ENCODE measurements at regions of chr12 and their contacts with region 1.

Region 1: GRCh38 chr12:98572010-98572409 is 21.5 kb upstream of the SLC25A3 start:
- DNase-seq: no peak
- H3K27ac ChIP-seq: no peak overlapping the region
- CTCF ChIP-seq: peak; percentile 13; the same call in 1 of the 2 replicates

Region 2: GRCh38 chr12:98543701-98544100 is 28.3 kb before region 1 on chr12:
- CTCF ChIA-PET with region 1: no interaction called
- POLR2A ChIA-PET with region 1: no interaction called
- DNase-seq: no peak
- H3K27ac ChIP-seq: no peak overlapping the region
- CTCF ChIP-seq: no peak

Region 3: DNA sequence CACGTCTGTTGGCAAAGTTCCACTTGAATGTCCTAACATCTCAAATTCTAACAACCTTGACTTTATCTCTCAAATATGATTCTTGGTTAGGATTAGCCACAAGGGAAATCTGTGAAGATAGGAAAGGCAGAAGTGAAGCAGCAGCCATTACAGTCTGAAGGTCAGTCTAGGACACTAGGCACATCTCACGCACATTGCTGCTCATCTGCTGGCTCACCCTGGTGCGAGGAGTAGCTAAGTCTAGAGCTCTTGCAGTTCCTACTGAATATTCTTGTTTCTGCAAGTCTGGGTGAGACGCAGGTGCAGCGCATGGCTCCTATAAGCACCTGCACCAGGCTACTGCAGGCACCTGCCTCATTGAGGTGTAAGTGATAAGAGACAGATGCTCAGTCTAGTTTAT is 15.1 kb after region 1 on chr12:
- CTCF ChIA-PET with region 1: interaction called, 11 read pairs
- POLR2A ChIA-PET with region 1: interaction called, 5 read pairs
- DNase-seq: no peak
- H3K27ac ChIP-seq: no peak overlapping the region
- CTCF ChIP-seq: no peak

Region 4: GRCh38 chr12:98593351-98594049 is 21.5 kb after region 1 on chr12 and contains the start of gene SLC25A3:
- CTCF ChIA-PET with region 1: interaction called, 11 read pairs
- POLR2A ChIA-PET with region 1: no interaction called
- DNase-seq: peak; percentile 98
- H3K27ac ChIP-seq: peak within 1 kb of the TSS; percentile 86
- CTCF ChIP-seq: no peak